ENCODE measurements at regions of chr1 and their contacts with region 1.

Region 1: DNA sequence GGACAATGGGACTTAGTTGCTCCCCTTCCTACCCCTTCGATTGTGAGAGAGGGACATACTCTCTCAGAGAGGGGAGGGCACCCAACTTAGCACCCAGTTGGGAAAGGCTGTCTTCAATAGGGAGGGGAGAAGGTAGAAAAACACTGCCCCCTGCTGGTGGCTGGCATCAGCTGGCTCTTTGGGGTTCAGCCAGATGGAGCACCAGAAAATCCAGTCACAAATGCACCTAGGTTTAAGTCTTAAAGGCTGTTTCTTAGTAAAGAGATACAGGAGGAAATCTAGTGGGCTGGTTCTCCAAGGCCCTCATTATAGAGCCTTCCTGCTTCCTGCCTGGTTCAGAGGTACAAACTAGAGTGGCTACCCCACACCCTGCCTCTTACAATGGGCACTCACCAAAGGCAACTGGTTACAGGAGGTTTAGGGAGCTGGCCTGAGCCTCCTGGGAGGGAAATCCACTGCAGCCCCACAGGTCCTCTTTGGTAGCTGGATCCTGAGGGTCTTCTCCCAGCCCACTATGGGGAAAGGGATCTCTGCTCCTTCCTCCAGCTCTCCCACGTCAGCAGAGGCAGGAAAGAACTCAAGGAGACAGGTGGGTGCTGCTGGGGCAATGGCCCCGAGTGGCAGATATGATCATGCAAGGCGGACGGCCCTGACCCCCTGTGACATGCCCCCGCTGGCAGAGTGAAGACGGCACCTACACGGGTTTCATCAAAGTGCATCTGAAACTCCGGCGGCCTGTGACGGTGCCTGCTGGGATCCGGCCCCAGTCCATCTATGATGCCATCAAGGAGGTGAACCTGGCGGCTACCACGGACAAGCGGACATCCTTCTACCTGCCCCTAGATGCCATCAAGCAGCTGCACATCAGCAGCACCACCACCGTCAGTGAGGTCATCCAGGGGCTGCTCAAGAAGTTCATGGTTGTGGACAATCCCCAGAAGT is 28.3 kb downstream of the EIF2D start:
- DNase-seq: peak; percentile 67
- H3K4me3 ChIP-seq: no peak overlapping the region
- H3K27ac ChIP-seq: no peak overlapping the region
- H3K4me1 ChIP-seq: peaks cover 32% of the 10 kb centered on the region
- H3K27me3 ChIP-seq: no peaks in the 10 kb centered on the region
- CTCF ChIP-seq: peak; percentile 92

Region 2: DNA sequence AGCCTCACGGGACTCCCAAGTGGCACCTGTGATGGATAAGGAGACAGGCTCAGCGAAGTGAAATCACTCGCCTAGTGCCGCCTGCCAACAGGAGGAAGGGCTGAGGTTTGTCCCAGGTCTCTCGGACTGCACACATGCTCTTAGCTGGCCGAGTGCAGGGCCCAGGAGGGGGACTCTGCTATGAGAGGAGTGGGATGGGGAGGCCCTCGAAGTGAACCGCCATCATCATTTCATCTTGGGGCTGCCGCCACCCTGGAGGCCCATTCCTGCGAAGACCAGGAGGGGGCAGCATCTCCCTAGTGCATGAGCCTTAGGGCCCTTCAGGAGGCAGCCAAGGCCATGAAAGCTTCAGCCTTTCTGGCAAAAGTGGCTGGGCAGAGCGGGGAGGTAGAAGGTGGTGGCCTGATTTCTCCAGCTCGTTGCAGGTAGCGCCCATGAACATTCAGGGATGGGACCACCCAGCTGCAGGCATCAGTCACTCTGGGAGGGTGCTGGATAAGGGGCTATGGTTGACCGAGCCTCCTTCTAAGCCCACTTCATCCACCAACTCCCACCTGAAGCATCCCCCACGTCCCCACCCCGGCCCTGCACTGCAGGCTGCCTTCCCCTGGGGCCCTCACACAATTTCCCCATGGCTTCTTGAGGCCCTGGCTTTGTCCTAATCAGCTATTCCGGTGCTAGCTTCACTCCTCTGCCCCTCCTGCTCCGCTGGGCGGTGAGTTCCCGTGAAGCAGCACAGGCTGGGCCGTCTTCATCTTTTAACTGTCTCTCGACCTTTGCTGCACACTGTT is 93.8 kb before region 1 on chr1:
- intact Hi-C with region 1: loop called (anchors 5 kb)
- DNase-seq: peak; percentile 75
- H3K4me3 ChIP-seq: no peak overlapping the region
- H3K27ac ChIP-seq: no peak overlapping the region
- H3K4me1 ChIP-seq: peaks cover 23% of the 10 kb centered on the region
- H3K27me3 ChIP-seq: no peaks in the 10 kb centered on the region
- CTCF ChIP-seq: peak; percentile 96

Region 3: GRCh38 chr1:206544562-206545257 is 39.3 kb before region 1 on chr1:
- intact Hi-C with region 1: loop called (anchors 2 kb)
- DNase-seq: peak; percentile 68
- H3K4me3 ChIP-seq: no peak overlapping the region
- H3K27ac ChIP-seq: no peak overlapping the region
- H3K4me1 ChIP-seq: peaks cover 11% of the 10 kb centered on the region
- H3K27me3 ChIP-seq: no peaks in the 10 kb centered on the region
- CTCF ChIP-seq: peak; percentile 92

Region 4: DNA sequence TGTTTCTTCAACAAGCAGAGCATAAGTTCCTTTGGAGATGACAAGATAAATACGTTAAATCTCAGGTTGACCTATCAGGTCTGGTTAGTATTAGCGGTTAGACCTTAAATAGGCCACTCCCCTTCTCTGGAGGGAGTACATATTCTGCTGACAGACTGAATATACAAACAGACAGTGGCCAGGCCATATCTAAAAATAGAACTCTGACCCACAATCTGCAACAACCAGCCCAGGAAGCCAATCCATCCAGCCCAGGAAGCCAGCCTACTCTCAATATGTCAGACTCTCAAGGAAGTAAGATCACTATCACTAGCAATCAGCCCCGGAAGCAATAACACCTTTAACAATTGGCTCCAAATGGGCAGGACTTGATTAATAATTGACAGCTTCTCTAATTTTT is 288.2 kb after region 1 on chr1:
- intact Hi-C with region 1: no loop called
- DNase-seq: no peak
- H3K4me3 ChIP-seq: no peak overlapping the region
- H3K27ac ChIP-seq: peak overlapping the region; percentile 40
- H3K4me1 ChIP-seq: peaks cover 6% of the 10 kb centered on the region
- H3K27me3 ChIP-seq: peaks cover 3% of the 10 kb centered on the region
- CTCF ChIP-seq: no peak